Transverse colon (tissue), 4 donors: ENCODE measurements at regions of chr1 and their contacts with region 1.

Region 1: DNA sequence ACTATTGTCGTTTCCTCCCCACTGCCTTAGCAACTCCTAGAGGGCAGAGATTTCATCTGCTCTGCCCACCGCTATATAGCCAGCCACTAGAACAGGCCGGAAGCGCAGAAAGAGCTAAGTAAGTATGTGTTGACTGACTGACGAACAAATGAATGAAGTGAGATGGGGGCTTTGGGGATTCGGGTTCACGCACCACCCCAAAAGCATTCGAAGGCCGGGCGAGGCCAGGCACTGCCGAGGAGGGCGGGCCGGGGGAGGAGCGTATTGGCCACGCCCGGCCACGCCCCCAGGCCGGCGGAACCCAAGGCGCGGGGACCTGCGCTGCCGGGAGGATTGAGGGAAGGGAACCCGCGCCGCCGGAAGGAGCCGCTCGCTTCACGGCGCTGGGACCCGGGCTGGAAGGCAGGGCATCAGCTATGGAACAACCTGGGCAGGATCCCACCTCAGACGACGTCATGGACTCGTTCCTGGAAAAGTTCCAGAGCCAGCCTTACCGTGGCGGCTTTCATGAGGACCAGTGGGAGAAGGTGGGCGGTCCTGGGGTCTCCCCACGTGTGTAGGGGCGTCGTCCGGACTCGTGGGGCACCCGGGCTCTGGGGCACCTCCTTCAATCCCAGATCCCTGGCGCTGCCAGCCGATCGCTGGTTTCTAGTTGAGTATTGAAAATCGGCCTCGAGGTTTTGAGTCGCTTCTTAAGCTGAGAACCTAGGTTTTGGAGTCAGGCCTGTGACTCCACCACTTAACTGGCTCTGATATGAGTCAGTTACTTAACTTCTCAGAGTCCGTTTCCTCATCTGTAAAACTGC is at the start of gene TTC4:
- DNase-seq: peak; percentile 87
- H3K4me3 ChIP-seq: peak within 1 kb of the TSS; percentile 70 to 95 (median 86)
- H3K27ac ChIP-seq: peak within 1 kb of the TSS; percentile 78 to 89 (median 85)
- H3K4me1 ChIP-seq: peaks cover 7 to 21% (median 11%) of the 10 kb centered on the region in 4 donors
- H3K27me3 ChIP-seq: no peaks in the 10 kb centered on the region
- CTCF ChIP-seq: peak in 3 of 5 experiments; percentile 6 to 19 (median 9)
- EP300 ChIP-seq: no peak
- POLR2A ChIP-seq: peak; percentile 58
- total RNA-seq, gene TTC4: 1.8 to 33.7 (median 15.2) TPM

Region 2: GRCh38 chr1:55931081-55931940 is 1215.6 kb after region 1 on chr1:
- in situ Hi-C with region 1: no loop called
- intact Hi-C with region 1: loop called (anchors 5 kb)
- DNase-seq: no peak
- H3K4me3 ChIP-seq: no peak overlapping the region
- H3K27ac ChIP-seq: no peak overlapping the region
- H3K4me1 ChIP-seq: peaks cover 3 to 17% (median 9%) of the 10 kb centered on the region in 4 donors
- H3K27me3 ChIP-seq: no peaks in the 10 kb centered on the region
- CTCF ChIP-seq: no peak
- EP300 ChIP-seq: no peak
- POLR2A ChIP-seq: no peak